H1 (cell line): ENCODE measurements at regions of chr2 and their contacts with region 1.

Region 1: GRCh38 chr2:37809525-37809924 is 115.6 kb upstream of the RMDN2 start:
- DNase-seq: no peak
- H3K4me3 ChIP-seq: no peak overlapping the region
- H3K27ac ChIP-seq: no peak overlapping the region
- H3K4me1 ChIP-seq: no peaks in the 10 kb centered on the region
- H3K27me3 ChIP-seq: no peaks in the 10 kb centered on the region
- CTCF ChIP-seq: peak in 2 of 3 experiments; percentile 37 to 40; a peak in 2 of 4 replicates
- EP300 ChIP-seq: no peak
- POLR2A ChIP-seq: no peak
- RAD21 ChIP-seq: peak; percentile 56 to 61

Region 2: GRCh38 chr2:37764739-37765138 is 44.8 kb before region 1 on chr2:
- CTCF ChIA-PET with region 1: no interaction called
- POLR2A ChIA-PET with region 1: no interaction called
- DNase-seq: no peak
- H3K4me3 ChIP-seq: no peak overlapping the region
- H3K27ac ChIP-seq: no peak overlapping the region
- H3K4me1 ChIP-seq: no peaks in the 10 kb centered on the region; a peak in 1 of 7 replicates
- H3K27me3 ChIP-seq: no peaks in the 10 kb centered on the region
- CTCF ChIP-seq: no peak
- EP300 ChIP-seq: no peak
- POLR2A ChIP-seq: no peak
- RAD21 ChIP-seq: no peak

Region 3: GRCh38 chr2:37795938-37796337 is 13.6 kb before region 1 on chr2:
- CTCF ChIA-PET with region 1: interaction called, 20 read pairs
- POLR2A ChIA-PET with region 1: no interaction called
- DNase-seq: no peak
- H3K4me3 ChIP-seq: no peak overlapping the region
- H3K27ac ChIP-seq: no peak overlapping the region
- H3K4me1 ChIP-seq: no peaks in the 10 kb centered on the region
- H3K27me3 ChIP-seq: no peaks in the 10 kb centered on the region
- CTCF ChIP-seq: no peak
- EP300 ChIP-seq: no peak
- POLR2A ChIP-seq: no peak
- RAD21 ChIP-seq: no peak